ENCODE measurements at regions of chrX and their contacts with region 1.

Region 1: DNA sequence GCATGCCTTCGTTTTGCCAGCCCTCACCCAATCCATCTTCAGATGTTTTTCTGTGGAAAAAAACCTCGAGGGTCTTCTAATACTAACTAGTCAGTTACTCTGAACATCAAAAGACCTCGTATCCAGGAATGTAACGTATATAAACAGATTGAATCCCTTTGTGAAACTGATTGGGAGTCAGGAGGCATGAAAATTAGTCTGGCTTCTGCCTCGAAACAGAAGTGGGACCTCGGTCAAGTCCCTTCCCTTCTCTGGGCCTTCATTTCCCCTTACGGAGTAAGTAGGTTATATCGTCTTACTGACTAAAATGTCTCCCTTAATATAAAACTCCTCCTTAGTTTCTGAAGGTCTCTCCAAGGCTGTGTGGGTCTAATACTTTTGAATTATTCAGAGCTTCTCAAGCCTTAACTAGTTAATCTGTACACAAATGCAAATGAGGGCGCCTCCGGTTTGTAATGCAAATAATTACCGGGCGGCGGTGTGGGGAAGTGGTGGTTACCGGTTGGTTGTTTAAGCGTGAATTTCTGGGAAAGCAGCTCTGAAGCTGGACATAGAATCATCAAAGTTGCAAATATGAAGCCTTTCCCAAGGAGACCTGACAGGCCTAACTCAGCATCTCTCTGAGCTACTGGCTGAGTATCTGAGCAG is 11.4 kb upstream of the NKRF start:
- DNase-seq: no peak
- H3K4me3 ChIP-seq: no peak overlapping the region
- H3K27ac ChIP-seq: no peak overlapping the region
- H3K4me1 ChIP-seq: no peaks in the 10 kb centered on the region
- H3K27me3 ChIP-seq: no peaks in the 10 kb centered on the region
- CTCF ChIP-seq: no peak

Region 2: DNA sequence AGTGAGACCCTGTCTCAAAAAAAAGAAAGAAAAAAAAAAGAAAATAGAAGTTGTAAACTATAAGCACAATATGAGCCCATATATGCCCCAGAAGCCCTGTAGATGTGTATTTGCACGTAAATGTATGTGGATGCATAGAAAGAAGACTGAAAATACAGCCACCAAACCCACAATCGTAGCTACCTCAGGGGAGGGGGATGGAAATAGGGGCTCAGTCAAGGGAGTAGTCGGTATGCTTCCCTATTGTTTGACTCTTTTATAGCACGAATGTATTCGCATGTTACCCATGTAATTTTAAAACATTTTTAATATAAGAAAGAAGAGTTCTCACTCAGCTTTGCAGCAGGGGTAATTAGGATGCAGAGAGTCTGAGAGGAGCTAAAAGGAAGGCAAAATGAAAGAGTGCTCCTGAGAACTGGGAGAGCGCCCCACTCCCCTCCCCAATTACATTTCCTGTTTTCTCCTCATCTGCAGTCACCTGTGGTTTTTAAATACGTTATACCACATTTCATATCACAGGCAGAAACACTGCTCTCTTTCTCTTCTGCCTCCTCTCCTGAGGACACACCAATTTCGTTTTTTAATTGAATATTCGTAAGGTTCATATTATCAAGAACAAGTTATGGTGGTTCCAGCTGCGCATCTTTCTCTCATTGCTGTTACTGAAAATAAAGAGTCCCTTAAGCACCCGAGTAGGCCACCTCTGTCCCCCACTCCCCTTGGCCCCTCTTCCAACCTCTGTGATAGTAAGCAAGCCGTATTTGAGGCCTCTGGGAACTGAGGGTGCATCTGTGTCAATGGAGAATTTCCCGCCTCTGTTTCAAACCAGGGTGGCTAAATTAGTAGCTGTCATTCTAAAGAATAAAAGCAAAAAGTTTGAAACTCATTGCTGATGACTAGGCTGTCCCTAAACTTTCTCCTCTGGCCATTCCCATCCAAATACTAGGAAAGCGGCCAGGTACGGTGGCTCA is 64.7 kb after region 1 on chrX:
- CTCF ChIA-PET with region 1: no interaction called
- POLR2A ChIA-PET with region 1: no interaction called
- intact Hi-C with region 1: no loop called
- DNase-seq: no peak
- H3K4me3 ChIP-seq: no peak overlapping the region
- H3K27ac ChIP-seq: no peak overlapping the region
- H3K4me1 ChIP-seq: no peaks in the 10 kb centered on the region
- H3K27me3 ChIP-seq: no peaks in the 10 kb centered on the region
- CTCF ChIP-seq: no peak

Region 3: GRCh38 chrX:119809185-119809666 is 191.6 kb after region 1 on chrX:
- CTCF ChIA-PET with region 1: interaction called, 14 read pairs
- POLR2A ChIA-PET with region 1: no interaction called
- intact Hi-C with region 1: no loop called
- DNase-seq: no peak
- H3K4me3 ChIP-seq: no peak overlapping the region
- H3K27ac ChIP-seq: no peak overlapping the region
- H3K4me1 ChIP-seq: no peaks in the 10 kb centered on the region
- H3K27me3 ChIP-seq: peaks cover under 1% of the 10 kb centered on the region; the same call in 1 of the 2 replicates
- CTCF ChIP-seq: no peak

Region 4: DNA sequence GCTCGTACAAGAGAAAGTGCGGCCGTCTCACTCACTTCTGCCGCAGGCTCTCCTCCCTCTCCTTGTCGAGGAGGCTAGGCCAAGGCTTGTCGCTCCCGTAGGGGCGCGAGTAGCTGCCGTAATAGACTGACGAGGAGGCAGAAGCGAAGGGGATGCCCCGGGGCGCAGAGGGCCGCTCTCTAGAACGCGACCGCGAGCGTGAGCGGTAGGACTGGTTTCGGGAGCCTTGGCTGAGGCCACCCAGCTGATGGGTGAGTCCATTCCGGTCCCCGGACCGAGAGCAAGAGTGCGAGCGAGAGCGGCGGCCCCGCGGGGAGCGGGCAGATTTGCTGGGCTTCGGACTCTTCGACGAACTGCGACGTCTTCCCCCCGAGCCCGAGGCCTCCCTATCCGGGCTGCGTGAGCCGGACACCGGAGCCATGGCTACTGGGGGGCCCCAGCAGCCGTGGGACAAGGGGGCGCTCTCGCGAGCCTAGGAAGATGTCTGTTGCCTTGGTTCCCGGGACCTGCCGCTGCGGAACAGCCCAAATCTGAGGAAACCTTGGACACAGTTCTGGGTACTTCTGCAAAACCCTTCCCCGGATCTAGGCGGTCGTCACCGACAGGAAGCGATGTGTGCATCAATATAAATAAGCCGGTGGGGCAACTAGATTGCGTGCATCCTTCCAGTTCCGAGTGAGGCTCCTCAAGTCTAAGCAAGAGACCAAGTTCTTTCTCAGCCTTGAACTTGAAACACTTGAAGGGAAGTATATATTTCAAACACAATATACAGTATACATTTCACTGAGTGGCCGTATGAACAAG is 325.7 kb after region 1 on chrX and contains the start of gene NKAP:
- CTCF ChIA-PET with region 1: no interaction called
- POLR2A ChIA-PET with region 1: no interaction called
- intact Hi-C with region 1: loop called (anchors 5 kb)
- DNase-seq: peak; percentile 88 to 89
- H3K4me3 ChIP-seq: peak within 1 kb of the TSS; percentile 79
- H3K27ac ChIP-seq: peak within 1 kb of the TSS; percentile 81
- H3K4me1 ChIP-seq: peaks cover 17% of the 10 kb centered on the region
- H3K27me3 ChIP-seq: no peaks in the 10 kb centered on the region
- CTCF ChIP-seq: no peak; the same call in 1 of the 2 replicates
- total RNA-seq, gene NKAP: 15.7 and 18.6 TPM in 2 replicates

Region 5: DNA sequence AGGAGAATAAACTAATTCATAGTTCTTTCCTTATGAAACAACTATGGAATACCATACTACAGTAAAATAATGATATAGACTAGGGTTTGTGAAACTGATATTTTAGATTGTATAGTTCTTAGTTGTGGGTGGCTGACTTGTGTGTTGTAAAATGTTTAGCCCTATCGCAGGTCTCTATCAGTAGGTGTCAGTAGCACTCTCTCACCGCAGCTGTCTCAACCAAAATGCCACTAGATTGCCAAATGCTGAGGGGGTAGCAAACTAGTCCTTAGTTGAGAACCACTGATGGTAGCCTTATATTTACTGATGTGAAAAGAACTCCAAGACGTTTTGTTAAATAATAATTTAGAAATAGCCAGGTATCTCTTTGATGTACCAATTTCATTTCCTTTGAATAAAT is 411.7 kb after region 1 on chrX:
- CTCF ChIA-PET with region 1: no interaction called
- POLR2A ChIA-PET with region 1: no interaction called
- intact Hi-C with region 1: no loop called
- DNase-seq: no peak
- H3K4me3 ChIP-seq: no peak overlapping the region
- H3K27ac ChIP-seq: no peak overlapping the region
- H3K4me1 ChIP-seq: no peaks in the 10 kb centered on the region
- H3K27me3 ChIP-seq: no peaks in the 10 kb centered on the region
- CTCF ChIP-seq: no peak

Measured in PC-9 (cell line).